ENCODE measurements at regions of chr4 and their contacts with region 1.

Region 1: DNA sequence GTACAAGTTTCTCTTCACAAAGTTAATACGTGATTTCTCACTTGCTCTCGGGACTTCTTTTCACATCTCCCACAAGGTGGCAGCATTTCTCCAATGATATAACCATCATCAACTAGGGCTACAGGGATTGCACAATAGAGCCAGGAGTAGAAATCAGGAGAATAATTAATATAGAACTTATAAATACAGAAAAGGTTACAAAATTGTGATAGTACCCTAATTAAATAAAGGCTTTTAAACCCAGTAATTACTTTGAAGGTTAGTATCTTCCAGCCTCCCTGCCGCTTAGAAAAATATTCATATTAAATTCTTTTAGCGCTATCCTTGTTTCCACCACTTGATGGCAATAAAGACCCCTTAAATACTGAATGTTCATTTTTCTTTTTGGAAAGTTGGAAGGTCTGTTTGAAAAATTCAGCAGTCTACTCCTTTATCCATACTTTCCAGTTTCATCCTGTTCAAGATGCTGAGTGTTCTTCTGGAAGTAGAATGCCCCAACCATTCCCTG is 65.8 kb downstream of the RASGEF1B start:
- DNase-seq: peak in 3 of 6 donors; percentile 38 to 56 (median 40)
- ATAC-seq: peak; percentile 89 to 98 (median 95)
- H3K4me3 ChIP-seq: no peak overlapping the region
- H3K27ac ChIP-seq: no peak overlapping the region
- H3K4me1 ChIP-seq: no peaks in the 10 kb centered on the region
- H3K27me3 ChIP-seq: no peaks in the 10 kb centered on the region
- CTCF ChIP-seq: peak; percentile 38 to 73 (median 64)

Region 2: DNA sequence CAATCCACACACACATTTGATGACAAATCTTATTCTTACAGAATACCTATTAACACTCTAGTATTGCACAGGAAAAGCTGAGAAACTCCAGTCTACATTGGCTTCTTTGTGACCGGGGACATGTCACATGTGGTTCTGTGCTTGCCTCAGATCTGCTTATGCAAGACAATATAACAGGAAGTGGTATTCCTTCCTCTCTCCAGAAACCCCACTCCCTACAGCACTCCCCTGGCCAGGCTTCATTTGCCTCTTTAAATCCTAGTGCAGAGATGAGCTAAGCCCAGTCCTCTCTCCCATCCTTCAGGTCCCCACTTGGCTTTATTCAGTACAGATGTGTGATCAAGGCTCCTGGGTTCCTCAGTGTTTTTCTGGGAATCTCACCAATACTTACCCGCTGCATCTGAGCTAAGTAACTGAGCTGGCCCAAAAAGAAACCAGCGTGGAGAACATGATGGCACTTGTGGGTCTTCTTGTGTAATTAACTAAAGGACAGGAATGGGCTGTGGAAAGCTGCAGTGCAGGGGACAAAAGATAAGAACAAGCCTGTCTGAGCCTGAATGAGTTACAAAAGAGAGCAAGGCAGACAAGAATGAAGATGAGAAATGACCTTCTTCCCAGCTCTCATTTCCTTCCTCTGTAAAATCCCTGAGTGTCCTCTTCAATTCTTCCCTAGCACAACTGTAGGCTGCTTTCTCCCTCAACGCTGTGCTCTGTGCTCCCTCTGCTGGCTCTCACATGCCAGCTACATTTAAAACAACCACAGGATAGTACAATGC is 862.3 kb after region 1 on chr4:
- intact Hi-C with region 1: loop called in 2 of 3 experiments (anchors 5 to 10 kb)
- DNase-seq: peak in 2 of 6 donors; percentile 17 to 50
- ATAC-seq: peak; percentile 68 to 99 (median 96)
- H3K4me3 ChIP-seq: no peak overlapping the region
- H3K27ac ChIP-seq: no peak overlapping the region
- H3K4me1 ChIP-seq: no peaks in the 10 kb centered on the region
- H3K27me3 ChIP-seq: no peaks in the 10 kb centered on the region
- CTCF ChIP-seq: peak in 3 of 4 donors; percentile 35 to 53 (median 48)

Region 3: GRCh38 chr4:82275431-82276331 is 869.7 kb after region 1 on chr4:
- intact Hi-C with region 1: loop called in 1 of 3 experiments (anchors 10 kb)
- DNase-seq: no peak
- ATAC-seq: no peak
- H3K4me3 ChIP-seq: no peak overlapping the region
- H3K27ac ChIP-seq: no peak overlapping the region
- H3K4me1 ChIP-seq: no peaks in the 10 kb centered on the region
- H3K27me3 ChIP-seq: no peaks in the 10 kb centered on the region
- CTCF ChIP-seq: no peak